Activated CD4-positive, alpha-beta T cell treated with anti-CD3 and anti-CD28 coated beads, Interleukin-2, amount 10 ng/mL, durations not matched to agents 7 days and 5 days (primary cell): ENCODE measurements at regions of chr5 and their contacts with region 1.

Region 1: GRCh38 chr5:175464074-175464941 is 14.1 kb upstream of the SFXN1 start:
- DNase-seq: peak; percentile 80
- H3K4me3 Mint-ChIP-seq: no peak overlapping the region
- H3K27ac Mint-ChIP-seq: peak overlapping the region; percentile 65
- H3K4me1 Mint-ChIP-seq: peaks cover 9% of the 10 kb centered on the region
- H3K27me3 Mint-ChIP-seq: peaks cover 14% of the 10 kb centered on the region

Region 2: DNA sequence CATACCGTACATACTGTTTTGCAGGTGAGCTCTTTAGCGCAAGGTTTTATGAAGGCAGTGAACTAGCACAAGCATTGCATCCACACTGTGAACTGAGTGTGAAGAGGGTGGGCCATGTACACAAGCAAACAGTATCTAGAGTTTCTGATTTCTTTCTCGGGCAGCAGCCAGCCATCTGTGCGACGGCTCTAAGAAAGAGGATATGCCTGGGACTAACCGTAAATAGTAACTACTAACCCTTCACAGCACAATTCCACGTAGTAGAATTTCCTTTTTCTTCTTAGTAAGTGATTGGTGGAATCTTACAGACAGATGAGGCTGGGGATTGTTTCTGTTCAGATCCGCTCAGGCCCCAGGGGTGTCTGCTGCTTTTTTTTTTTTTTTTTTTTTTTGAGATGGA is 109.3 kb before region 1 on chr5:
- CTCF ChIA-PET with region 1: no interaction called
- POLR2A ChIA-PET with region 1: no interaction called
- DNase-seq: no peak
- H3K4me3 Mint-ChIP-seq: no peak overlapping the region
- H3K27ac Mint-ChIP-seq: no peak overlapping the region
- H3K4me1 Mint-ChIP-seq: no peaks in the 10 kb centered on the region
- H3K27me3 Mint-ChIP-seq: peaks cover 7% of the 10 kb centered on the region

Region 3: GRCh38 chr5:175378444-175379028 is 85.8 kb before region 1 on chr5:
- CTCF ChIA-PET with region 1: no interaction called
- POLR2A ChIA-PET with region 1: no interaction called
- DNase-seq: no peak
- H3K4me3 Mint-ChIP-seq: no peak overlapping the region
- H3K27ac Mint-ChIP-seq: no peak overlapping the region
- H3K4me1 Mint-ChIP-seq: no peaks in the 10 kb centered on the region
- H3K27me3 Mint-ChIP-seq: peaks cover 13% of the 10 kb centered on the region

Region 4: DNA sequence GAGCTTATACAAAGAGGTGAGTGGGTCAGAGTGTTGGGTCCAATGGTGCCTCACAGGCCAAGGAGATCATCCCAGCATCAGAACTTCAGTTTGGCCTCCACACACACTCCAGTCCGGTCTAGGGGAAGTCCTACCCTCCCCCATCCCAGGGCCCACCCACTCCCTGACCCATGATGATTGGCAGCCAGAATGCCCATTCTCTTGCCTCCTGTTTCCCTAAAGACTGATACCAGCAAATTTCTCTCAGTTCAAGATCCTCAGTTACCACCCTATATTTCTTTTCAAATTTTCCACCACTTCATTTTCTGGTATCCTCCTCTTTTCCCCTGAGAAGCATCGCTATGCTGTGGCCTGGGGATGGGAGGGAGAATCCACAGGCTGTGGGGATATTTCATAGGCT is 42.2 kb before region 1 on chr5:
- CTCF ChIA-PET with region 1: no interaction called
- POLR2A ChIA-PET with region 1: interaction called, 14 read pairs
- DNase-seq: no peak
- H3K4me3 Mint-ChIP-seq: no peak overlapping the region
- H3K27ac Mint-ChIP-seq: no peak overlapping the region
- H3K4me1 Mint-ChIP-seq: no peaks in the 10 kb centered on the region
- H3K27me3 Mint-ChIP-seq: peaks cover 22% of the 10 kb centered on the region

Region 5: GRCh38 chr5:175478384-175479124 is 14.2 kb after region 1 on chr5 and contains the start of gene SFXN1:
- CTCF ChIA-PET with region 1: interaction called, 31 read pairs
- POLR2A ChIA-PET with region 1: interaction called, 5 read pairs
- DNase-seq: peak; percentile 78
- H3K4me3 Mint-ChIP-seq: peak within 1 kb of the TSS; percentile 88
- H3K27ac Mint-ChIP-seq: peak within 1 kb of the TSS; percentile 93
- H3K4me1 Mint-ChIP-seq: peaks cover 42% of the 10 kb centered on the region
- H3K27me3 Mint-ChIP-seq: peaks cover 18% of the 10 kb centered on the region
- total RNA-seq, gene SFXN1: 149 to 163 TPM

Region 6: GRCh38 chr5:175567954-175568353 is 103.6 kb after region 1 on chr5:
- CTCF ChIA-PET with region 1: no interaction called
- POLR2A ChIA-PET with region 1: no interaction called
- DNase-seq: no peak
- H3K4me3 Mint-ChIP-seq: no peak overlapping the region
- H3K27ac Mint-ChIP-seq: no peak overlapping the region
- H3K4me1 Mint-ChIP-seq: peaks cover 2% of the 10 kb centered on the region
- H3K27me3 Mint-ChIP-seq: peaks cover 18% of the 10 kb centered on the region